SK-N-SH (cell line): ENCODE measurements at regions of chr3 and their contacts with region 1.

Region 1: GRCh38 chr3:139718415-139718814 is 40.6 kb upstream of the NMNAT3 start:
- DNase-seq: peak; percentile 45
- H3K4me3 ChIP-seq: no peak overlapping the region
- H3K27ac ChIP-seq: no peak overlapping the region
- H3K4me1 ChIP-seq: peaks cover 0 to 5% of the 10 kb centered on the region in 2 experiments; a peak in 1 of 4 replicates
- H3K27me3 ChIP-seq: no peaks in the 10 kb centered on the region
- CTCF ChIP-seq: no peak
- EP300 ChIP-seq: no peak
- RAD21 ChIP-seq: peak; percentile 59

Region 2: DNA sequence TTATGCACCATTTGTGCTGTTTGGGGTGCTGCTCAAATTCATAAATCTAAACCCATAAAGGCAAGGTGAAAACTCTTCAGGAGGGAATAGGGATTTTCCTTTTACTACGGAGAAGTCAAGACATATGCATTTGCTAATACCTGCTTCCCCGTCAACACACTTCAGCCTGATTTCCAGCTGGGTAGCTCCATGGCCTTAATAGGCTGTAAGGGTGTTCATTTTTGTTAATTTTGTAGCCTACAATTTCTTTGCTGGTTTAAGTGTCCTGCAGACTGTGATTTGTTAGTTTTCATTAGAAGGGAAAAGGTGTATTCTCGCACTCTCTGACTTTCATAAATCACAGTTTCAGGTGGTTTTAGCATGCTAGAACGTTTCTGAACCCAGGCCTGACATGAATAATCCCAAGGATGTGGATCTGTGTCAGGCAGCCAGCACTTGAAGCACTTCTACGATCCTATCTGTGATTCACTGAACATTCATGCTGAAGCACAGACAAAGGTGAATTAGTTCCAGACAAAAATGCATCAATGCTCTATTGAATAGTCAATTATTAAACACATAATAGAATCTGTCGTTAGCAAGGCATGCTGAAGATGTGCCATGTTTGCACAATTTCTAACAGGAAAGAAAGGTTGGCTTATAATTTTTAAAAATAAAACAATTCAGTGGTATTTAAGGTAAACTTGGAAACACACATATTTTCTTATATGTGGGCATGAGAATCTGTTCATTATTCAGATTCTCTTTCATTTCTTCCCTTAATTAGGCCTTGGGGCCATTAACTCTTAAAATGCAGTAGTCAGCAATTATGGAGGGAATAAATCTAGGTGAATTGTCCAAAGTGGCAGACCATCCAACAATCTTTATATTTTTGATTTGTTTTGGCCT is 22.7 kb before region 1 on chr3:
- CTCF ChIA-PET with region 1: interaction called, 15 read pairs
- POLR2A ChIA-PET with region 1: no interaction called
- DNase-seq: no peak
- H3K4me3 ChIP-seq: no peak overlapping the region
- H3K27ac ChIP-seq: peak overlapping the region in 1 of 2 experiments; percentile 50; a peak in 1 of 4 replicates
- H3K4me1 ChIP-seq: peaks cover 0 to 41% of the 10 kb centered on the region in 2 experiments; a peak in 2 of 4 replicates
- H3K27me3 ChIP-seq: no peaks in the 10 kb centered on the region
- CTCF ChIP-seq: no peak
- EP300 ChIP-seq: no peak
- RAD21 ChIP-seq: no peak

Region 3: GRCh38 chr3:139729300-139729699 is 10.9 kb after region 1 on chr3:
- CTCF ChIA-PET with region 1: interaction called, 12 read pairs
- POLR2A ChIA-PET with region 1: no interaction called
- DNase-seq: no peak
- H3K4me3 ChIP-seq: no peak overlapping the region
- H3K27ac ChIP-seq: no peak overlapping the region
- H3K4me1 ChIP-seq: no peaks in the 10 kb centered on the region
- H3K27me3 ChIP-seq: no peaks in the 10 kb centered on the region
- CTCF ChIP-seq: no peak
- EP300 ChIP-seq: no peak
- RAD21 ChIP-seq: no peak